Activated CD4-positive, alpha-beta T cell treated with anti-CD3 and anti-CD28 coated beads, Interleukin-2, amount 10 ng/mL, durations not matched to agents 24 days and 14 days (primary cell): ENCODE measurements at regions of chr19 and their contacts with region 1.

Region 1: DNA sequence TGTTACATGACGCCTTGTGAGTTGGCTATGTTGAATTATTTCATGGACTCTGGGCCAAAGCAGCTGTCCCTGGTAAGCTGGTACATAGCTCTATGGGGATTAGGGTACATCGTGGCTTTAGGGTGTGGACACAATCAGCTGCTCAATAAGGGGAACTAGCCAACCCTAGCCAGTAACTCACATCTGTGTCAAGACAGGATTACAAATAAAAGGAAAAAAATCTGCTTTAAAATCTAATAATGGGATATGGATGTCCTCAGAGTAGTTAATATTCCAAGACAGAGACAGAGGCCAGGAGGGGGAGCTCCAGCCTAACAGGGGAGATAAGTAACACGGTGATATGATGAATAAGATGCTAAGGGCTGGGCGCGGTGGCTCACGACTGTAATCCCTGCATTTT is 21.1 kb upstream of the ZNF766 start:
- DNase-seq: peak; percentile 82
- H3K4me3 Mint-ChIP-seq: no peak overlapping the region
- H3K27ac Mint-ChIP-seq: no peak overlapping the region
- H3K4me1 Mint-ChIP-seq: no peaks in the 10 kb centered on the region
- H3K27me3 Mint-ChIP-seq: no peaks in the 10 kb centered on the region

Region 2: DNA sequence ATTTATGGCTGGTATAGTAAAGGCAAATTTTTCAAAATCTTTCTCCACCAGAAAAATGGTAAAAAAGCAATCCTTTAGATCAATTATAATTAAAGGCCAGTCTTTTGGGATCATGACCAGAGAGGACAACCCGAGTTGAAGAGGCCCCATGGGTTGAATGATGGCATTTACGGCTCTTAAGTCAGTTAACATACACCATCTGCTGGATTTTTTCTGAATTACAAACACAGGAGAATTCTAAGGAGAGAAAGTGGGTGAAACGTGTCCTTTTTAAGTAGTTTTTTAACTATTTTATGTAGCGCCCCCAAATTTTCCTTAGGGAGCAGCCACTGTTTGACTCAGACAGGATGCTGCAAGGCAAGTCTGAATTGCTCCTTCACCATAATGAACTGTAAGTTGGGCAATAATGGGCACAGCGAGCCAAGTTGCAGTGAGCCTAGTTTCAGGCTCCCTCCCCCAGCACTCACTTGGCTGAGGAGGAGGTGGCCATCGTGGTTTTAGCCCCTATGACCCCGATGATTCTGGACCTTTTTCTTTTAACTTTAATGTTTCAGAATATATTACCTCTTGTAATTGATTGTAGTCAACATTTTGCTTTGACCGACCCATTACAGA is 500.2 kb after region 1 on chr19:
- intact Hi-C with region 1: loop called (anchors 10 kb)
- DNase-seq: peak; percentile 61
- H3K4me3 Mint-ChIP-seq: no peak overlapping the region
- H3K27ac Mint-ChIP-seq: no peak overlapping the region
- H3K4me1 Mint-ChIP-seq: peaks cover 6% of the 10 kb centered on the region
- H3K27me3 Mint-ChIP-seq: no peaks in the 10 kb centered on the region